H1 (cell line): ENCODE measurements at regions of chr14 and their contacts with region 1.

Region 1: GRCh38 chr14:91323671-91324605 is 79.4 kb upstream of the GPR68 start:
- DNase-seq: peak; percentile 47 to 98
- H3K4me3 ChIP-seq: no peak overlapping the region
- H3K27ac ChIP-seq: no peak overlapping the region
- H3K4me1 ChIP-seq: peaks cover 0 to 2% (median 0%) of the 10 kb centered on the region in 4 experiments; a peak in 2 of 7 replicates
- H3K27me3 ChIP-seq: no peaks in the 10 kb centered on the region
- CTCF ChIP-seq: peak; percentile 80 to 90 (median 85)
- EP300 ChIP-seq: no peak
- POLR2A ChIP-seq: no peak
- RAD21 ChIP-seq: peak; percentile 89 to 95

Region 2: GRCh38 chr14:91341751-91342154 is 17.8 kb after region 1 on chr14:
- CTCF ChIA-PET with region 1: interaction called, 50 read pairs
- POLR2A ChIA-PET with region 1: no interaction called
- DNase-seq: no peak
- H3K4me3 ChIP-seq: no peak overlapping the region
- H3K27ac ChIP-seq: no peak overlapping the region
- H3K4me1 ChIP-seq: no peaks in the 10 kb centered on the region; a peak in 1 of 7 replicates
- H3K27me3 ChIP-seq: no peaks in the 10 kb centered on the region
- CTCF ChIP-seq: no peak
- EP300 ChIP-seq: no peak
- POLR2A ChIP-seq: no peak
- RAD21 ChIP-seq: no peak

Region 3: GRCh38 chr14:91402771-91403600 is 79.0 kb after region 1 on chr14:
- CTCF ChIA-PET with region 1: interaction called, 12 read pairs
- POLR2A ChIA-PET with region 1: no interaction called
- DNase-seq: no peak
- H3K4me3 ChIP-seq: no peak overlapping the region
- H3K27ac ChIP-seq: no peak overlapping the region
- H3K4me1 ChIP-seq: peaks cover 3 to 21% (median 12%) of the 10 kb centered on the region in 4 experiments; a peak in 6 of 7 replicates
- H3K27me3 ChIP-seq: no peaks in the 10 kb centered on the region
- CTCF ChIP-seq: no peak
- EP300 ChIP-seq: no peak
- POLR2A ChIP-seq: no peak
- RAD21 ChIP-seq: no peak

Region 4: DNA sequence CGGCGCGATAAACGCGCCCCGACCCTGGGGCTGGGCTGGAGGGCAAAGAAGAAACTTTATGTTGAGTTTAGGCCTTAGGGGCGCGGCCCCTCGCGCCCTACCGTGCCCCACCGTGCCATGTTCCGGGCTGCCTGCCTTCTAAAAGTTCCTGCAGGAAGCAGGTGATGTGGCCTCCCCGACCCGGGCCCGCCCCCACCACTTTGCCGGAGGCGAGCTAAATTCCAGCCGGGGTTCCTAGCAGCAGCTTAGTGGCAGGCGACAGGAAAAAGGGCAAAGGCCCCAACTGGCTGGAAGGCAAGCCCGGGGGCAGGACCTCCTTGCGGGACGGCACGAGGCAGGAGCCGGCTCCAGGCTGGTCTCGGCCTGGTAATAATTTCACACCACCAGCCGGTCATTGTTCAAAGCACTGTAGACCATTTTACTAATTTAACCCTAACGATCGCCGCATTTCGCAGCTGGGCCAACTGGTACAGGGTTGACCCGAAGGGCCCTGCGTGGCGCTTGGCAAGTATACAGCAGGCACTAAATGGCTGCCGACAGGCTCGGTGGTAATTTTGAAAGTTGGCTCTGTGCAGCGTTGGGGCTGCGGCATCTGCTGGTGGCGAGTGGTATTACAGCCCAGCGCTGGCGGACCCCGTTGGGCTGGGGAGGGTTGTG is 94.6 kb after region 1 on chr14:
- CTCF ChIA-PET with region 1: interaction called, 64 read pairs
- POLR2A ChIA-PET with region 1: interaction called, 8 read pairs
- DNase-seq: peak; percentile 39 to 96
- H3K4me3 ChIP-seq: peak overlapping the region; percentile 35 to 92 (median 63)
- H3K27ac ChIP-seq: no peak overlapping the region
- H3K4me1 ChIP-seq: peaks cover 7 to 26% (median 13%) of the 10 kb centered on the region in 4 experiments; a peak in 6 of 7 replicates
- H3K27me3 ChIP-seq: peaks cover 0 to 6% (median 3%) of the 10 kb centered on the region in 4 experiments; a peak in 2 of 7 replicates
- CTCF ChIP-seq: peak; percentile 90 to 92 (median 91)
- EP300 ChIP-seq: no peak
- POLR2A ChIP-seq: no peak
- RAD21 ChIP-seq: peak; percentile 90 to 91

Region 5: DNA sequence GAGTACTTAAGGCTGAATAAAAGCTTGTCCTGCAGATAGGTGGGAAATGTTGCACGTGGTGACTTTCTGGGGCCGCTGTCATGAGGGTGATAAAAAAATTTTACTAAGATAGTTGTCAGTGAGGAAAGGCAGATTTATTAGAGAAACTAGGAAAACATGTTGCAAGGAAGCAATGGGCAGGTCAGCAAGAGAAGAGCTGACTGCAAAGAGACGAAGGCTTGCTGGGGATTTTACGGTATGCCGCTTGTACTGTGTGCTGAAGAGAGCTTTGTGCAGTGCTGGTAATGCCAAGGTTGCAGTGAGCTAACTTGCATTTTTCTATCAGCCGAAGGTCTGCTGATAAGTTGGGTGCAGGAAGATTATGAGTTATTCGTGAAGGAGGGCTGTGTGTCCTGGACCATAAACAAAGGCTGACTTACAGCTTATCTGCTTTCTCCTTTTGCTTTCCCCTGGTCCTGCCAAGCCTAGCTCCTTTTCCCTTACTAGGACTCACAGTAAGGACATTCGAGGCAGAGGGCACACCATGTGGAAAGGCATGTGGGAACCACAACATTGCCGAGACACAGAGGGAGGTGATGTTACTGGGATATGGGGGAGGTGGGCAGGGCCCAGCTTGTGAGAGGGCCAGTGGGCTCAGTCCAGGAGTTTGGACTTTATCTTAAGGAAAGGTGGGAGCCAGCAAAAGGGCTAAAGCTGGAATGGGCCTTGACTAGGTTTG is 101.0 kb after region 1 on chr14:
- CTCF ChIA-PET with region 1: interaction called, 64 read pairs
- POLR2A ChIA-PET with region 1: interaction called, 3 read pairs
- DNase-seq: no peak
- H3K4me3 ChIP-seq: no peak overlapping the region
- H3K27ac ChIP-seq: no peak overlapping the region
- H3K4me1 ChIP-seq: no peaks in the 10 kb centered on the region
- H3K27me3 ChIP-seq: no peaks in the 10 kb centered on the region
- CTCF ChIP-seq: no peak
- EP300 ChIP-seq: no peak
- POLR2A ChIP-seq: no peak
- RAD21 ChIP-seq: no peak